ENCODE measurements at regions of chr6 and their contacts with region 1.

Region 1: DNA sequence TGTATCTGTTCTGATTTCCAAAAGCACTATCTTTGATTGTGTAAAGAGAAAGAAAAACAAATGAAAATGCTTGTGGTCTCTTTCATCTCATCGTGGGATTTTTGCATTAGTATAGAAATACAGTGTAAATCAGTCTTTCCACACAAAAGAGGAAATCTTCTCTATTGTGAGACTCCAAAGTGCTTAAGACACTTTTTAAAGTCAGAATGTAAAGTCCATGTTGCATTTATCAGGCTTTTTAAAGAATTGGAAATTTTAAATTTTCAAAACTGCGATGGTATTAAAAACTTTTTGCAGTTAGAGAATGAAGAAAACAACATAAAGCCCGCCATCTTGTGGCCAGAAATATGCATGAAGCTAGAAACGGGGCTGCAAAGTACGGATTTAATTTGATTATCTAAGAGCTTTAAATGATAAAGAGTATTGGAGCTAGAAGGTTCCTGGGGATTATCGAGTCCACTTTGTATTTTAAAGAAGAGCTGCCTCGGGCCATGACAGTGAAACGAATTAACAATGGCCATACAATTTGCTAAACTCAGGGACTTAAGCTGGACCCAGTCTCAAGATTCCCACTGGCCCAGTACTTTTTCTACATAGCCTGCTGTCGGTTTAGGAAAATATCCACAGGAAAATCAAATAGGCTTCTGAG is 339.6 kb downstream of the ARHGAP18 start:
- DNase-seq: peak in 7 of 9 donors; percentile 3 to 42 (median 29)
- ATAC-seq: peak; percentile 44
- H3K4me3 ChIP-seq: no peak overlapping the region
- H3K4me3 Mint-ChIP-seq: peak overlapping the region in 6 of 10 donors; percentile 13 to 65 (median 55)
- H3K27ac ChIP-seq: no peak overlapping the region
- H3K27ac Mint-ChIP-seq: no peak overlapping the region
- H3K4me1 ChIP-seq: peaks cover 0 to 5% of the 10 kb centered on the region in 2 donors
- H3K4me1 Mint-ChIP-seq: peaks cover 0 to 17% (median 9%) of the 10 kb centered on the region in 7 donors
- H3K27me3 ChIP-seq: no peaks in the 10 kb centered on the region
- H3K27me3 Mint-ChIP-seq: peaks cover 0 to 2% (median 0%) of the 10 kb centered on the region in 5 donors

Region 2: GRCh38 chr6:128725271-128726233 is 644.8 kb before region 1 on chr6:
- CTCF ChIA-PET with region 1: no interaction called
- POLR2A ChIA-PET with region 1: no interaction called
- intact Hi-C with region 1: loop called (anchors 1 kb)
- DNase-seq: peak in 3 of 9 donors; percentile 4 to 7 (median 7)
- ATAC-seq: no peak
- H3K4me3 ChIP-seq: no peak overlapping the region
- H3K4me3 Mint-ChIP-seq: no peak overlapping the region
- H3K27ac ChIP-seq: no peak overlapping the region
- H3K27ac Mint-ChIP-seq: no peak overlapping the region
- H3K4me1 ChIP-seq: no peaks in the 10 kb centered on the region
- H3K4me1 Mint-ChIP-seq: no peaks in the 10 kb centered on the region
- H3K27me3 ChIP-seq: no peaks in the 10 kb centered on the region
- H3K27me3 Mint-ChIP-seq: peaks cover 9 to 28% (median 21%) of the 10 kb centered on the region in 5 donors

Region 3: DNA sequence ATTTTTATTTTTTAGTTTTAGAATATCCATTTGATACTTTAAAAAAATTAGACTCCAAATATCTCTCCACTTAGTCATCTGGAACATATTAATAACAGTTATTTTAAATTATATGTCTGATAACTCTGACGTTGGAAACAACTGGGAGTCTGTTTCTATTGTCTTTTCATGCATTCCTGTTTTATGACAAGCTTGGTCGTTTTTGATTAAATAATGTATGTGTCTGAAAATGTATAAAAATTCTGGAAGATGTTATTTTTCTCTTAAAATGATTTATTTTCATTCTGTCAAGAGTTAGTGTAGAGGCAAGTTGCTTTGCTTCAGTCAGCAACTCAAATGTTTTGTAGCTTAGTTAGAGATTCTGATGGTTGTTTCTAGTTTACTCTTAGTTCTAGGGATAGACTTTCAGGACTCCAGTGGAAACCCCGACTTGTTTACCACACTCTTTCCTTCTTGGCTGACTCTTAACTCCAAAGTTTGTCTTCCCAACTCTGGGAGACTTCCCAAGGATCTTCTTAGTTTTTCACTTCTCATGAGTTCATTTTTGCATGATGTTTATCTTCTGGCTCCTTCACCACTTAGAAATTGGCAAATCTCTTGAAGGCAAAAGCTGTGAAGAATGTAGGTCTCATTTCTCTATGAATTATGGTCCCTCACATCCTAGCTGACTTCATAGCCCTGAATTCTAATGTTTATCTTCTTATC is 296.5 kb before region 1 on chr6:
- CTCF ChIA-PET with region 1: no interaction called
- POLR2A ChIA-PET with region 1: no interaction called
- intact Hi-C with region 1: no loop called
- DNase-seq: no peak
- ATAC-seq: no peak
- H3K4me3 ChIP-seq: no peak overlapping the region
- H3K4me3 Mint-ChIP-seq: no peak overlapping the region
- H3K27ac ChIP-seq: no peak overlapping the region
- H3K27ac Mint-ChIP-seq: no peak overlapping the region
- H3K4me1 ChIP-seq: no peaks in the 10 kb centered on the region
- H3K4me1 Mint-ChIP-seq: no peaks in the 10 kb centered on the region
- H3K27me3 ChIP-seq: no peaks in the 10 kb centered on the region
- H3K27me3 Mint-ChIP-seq: peaks cover 0 to 19% (median 14%) of the 10 kb centered on the region in 5 donors

Region 4: DNA sequence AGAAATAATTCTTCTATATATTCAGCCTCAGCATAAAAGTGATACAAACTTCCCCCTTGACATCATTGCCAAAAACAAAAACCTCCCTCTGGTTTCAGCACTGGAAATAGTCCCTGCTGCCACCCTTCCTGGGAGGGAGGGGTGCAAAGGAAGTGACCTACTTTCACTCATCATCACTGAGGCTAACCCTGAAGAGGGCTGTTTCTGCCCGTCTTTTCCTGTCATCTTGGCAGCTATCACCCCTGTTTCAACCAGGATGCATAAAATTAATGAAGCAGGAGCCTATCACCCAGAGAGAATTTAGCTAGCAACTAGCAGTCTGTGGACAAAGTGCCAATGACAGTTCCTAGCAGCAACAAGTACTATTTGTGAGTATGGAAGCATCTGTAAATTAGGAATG is 89.6 kb before region 1 on chr6:
- CTCF ChIA-PET with region 1: no interaction called
- POLR2A ChIA-PET with region 1: no interaction called
- intact Hi-C with region 1: loop called in 1 of 2 experiments (anchors 5 kb)
- DNase-seq: peak in 7 of 9 donors; percentile 8 to 42 (median 27)
- ATAC-seq: peak; percentile 90
- H3K4me3 ChIP-seq: no peak overlapping the region
- H3K4me3 Mint-ChIP-seq: peak overlapping the region in 3 of 10 donors; percentile 22 to 69 (median 23)
- H3K27ac ChIP-seq: no peak overlapping the region
- H3K27ac Mint-ChIP-seq: peak overlapping the region in 3 of 9 donors; percentile 40 to 60 (median 56)
- H3K4me1 ChIP-seq: peaks cover 3 to 16% of the 10 kb centered on the region in 2 donors
- H3K4me1 Mint-ChIP-seq: peaks cover 0 to 22% (median 10%) of the 10 kb centered on the region in 7 donors
- H3K27me3 ChIP-seq: no peaks in the 10 kb centered on the region
- H3K27me3 Mint-ChIP-seq: peaks cover 0 to 7% (median 5%) of the 10 kb centered on the region in 5 donors

Region 5: GRCh38 chr6:129575378-129576118 is 205.2 kb after region 1 on chr6:
- CTCF ChIA-PET with region 1: no interaction called
- POLR2A ChIA-PET with region 1: no interaction called
- intact Hi-C with region 1: loop called in 1 of 2 experiments (anchors 1 kb)
- DNase-seq: peak in 5 of 9 donors; percentile 4 to 31 (median 21)
- ATAC-seq: peak; percentile 71
- H3K4me3 ChIP-seq: no peak overlapping the region
- H3K4me3 Mint-ChIP-seq: peak overlapping the region in 9 of 10 donors; percentile 48 to 66 (median 59)
- H3K27ac ChIP-seq: no peak overlapping the region
- H3K27ac Mint-ChIP-seq: peak overlapping the region in 2 of 9 donors; percentile 22 to 41
- H3K4me1 ChIP-seq: peaks cover 0 to 3% of the 10 kb centered on the region in 2 donors
- H3K4me1 Mint-ChIP-seq: peaks cover 0 to 11% (median 8%) of the 10 kb centered on the region in 7 donors
- H3K27me3 ChIP-seq: no peaks in the 10 kb centered on the region
- H3K27me3 Mint-ChIP-seq: peaks cover 0 to 5% (median 0%) of the 10 kb centered on the region in 5 donors

Measured in naive thymus-derived CD4-positive, alpha-beta T cell (primary cell).